ENCODE measurements at regions of chr4 and their contacts with region 1.

Region 1: DNA sequence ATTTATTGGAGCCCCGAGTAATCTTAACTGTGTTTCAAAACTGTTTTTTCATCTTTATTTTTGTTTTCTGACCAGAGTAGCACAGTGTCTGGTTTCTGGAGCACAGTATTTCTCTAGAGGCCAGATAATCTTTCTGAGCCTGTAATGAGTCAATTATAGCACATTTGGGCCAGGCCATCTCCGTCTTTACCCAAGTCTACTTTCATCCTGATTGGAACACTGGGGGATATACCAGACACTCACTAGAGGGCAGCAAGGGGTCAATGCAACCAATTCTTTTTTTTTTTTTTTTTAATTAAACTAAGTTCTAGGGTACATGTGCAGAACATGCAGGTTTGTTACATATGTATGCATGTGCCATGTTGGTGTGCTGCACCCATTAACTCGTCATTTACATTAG is 282.0 kb downstream of the ARHGAP24 start:
- DNase-seq: no peak
- H3K4me3 Mint-ChIP-seq: no peak overlapping the region
- H3K27ac Mint-ChIP-seq: no peak overlapping the region
- H3K4me1 Mint-ChIP-seq: no peaks in the 10 kb centered on the region
- H3K27me3 Mint-ChIP-seq: no peaks in the 10 kb centered on the region

Region 2: GRCh38 chr4:86043755-86044592 is 287.0 kb after region 1 on chr4:
- CTCF ChIA-PET with region 1: no interaction called
- intact Hi-C with region 1: loop called (anchors 10 kb)
- DNase-seq: peak; percentile 9
- H3K4me3 Mint-ChIP-seq: no peak overlapping the region
- H3K27ac Mint-ChIP-seq: no peak overlapping the region
- H3K4me1 Mint-ChIP-seq: no peaks in the 10 kb centered on the region
- H3K27me3 Mint-ChIP-seq: no peaks in the 10 kb centered on the region

Region 3: GRCh38 chr4:86155766-86156165 is 398.8 kb after region 1 on chr4:
- CTCF ChIA-PET with region 1: no interaction called
- intact Hi-C with region 1: no loop called
- DNase-seq: no peak
- H3K4me3 Mint-ChIP-seq: no peak overlapping the region
- H3K27ac Mint-ChIP-seq: no peak overlapping the region
- H3K4me1 Mint-ChIP-seq: no peaks in the 10 kb centered on the region
- H3K27me3 Mint-ChIP-seq: no peaks in the 10 kb centered on the region

Region 4: DNA sequence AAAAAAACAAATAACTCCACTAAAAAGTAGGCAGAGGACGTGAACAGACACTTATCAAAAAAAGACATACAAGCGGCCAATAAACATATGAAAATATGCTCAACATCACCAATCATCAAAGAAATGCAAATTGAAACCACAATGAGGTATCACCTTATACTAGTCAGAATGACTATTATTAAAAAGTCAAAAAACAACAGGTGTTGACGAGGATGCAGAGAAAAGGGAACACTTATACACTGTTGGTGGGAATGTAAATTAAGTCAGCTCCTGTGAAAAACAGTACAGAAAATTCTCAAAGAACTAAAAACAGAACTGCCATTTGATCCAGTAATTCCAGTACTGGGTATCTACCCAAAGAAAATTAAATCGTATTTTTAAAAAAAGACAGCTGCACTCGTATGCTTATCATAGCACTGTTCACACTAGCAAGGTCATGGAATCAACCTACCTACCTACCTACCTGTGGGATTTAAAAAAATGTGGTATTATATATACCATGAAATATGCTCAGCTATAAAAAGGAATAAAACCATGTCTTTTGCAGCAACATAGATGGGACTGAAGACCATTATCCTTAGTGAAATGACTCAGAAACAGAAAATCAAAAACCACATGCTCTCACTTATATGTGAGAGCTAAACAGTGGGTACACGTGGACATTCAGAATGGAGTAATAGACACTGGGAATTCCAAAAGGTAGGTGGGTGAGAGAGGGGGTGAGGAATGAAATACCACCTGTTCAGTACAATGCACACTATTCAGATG is 812.3 kb after region 1 on chr4:
- CTCF ChIA-PET with region 1: no interaction called
- intact Hi-C with region 1: no loop called
- DNase-seq: no peak
- H3K4me3 Mint-ChIP-seq: no peak overlapping the region
- H3K27ac Mint-ChIP-seq: no peak overlapping the region
- H3K4me1 Mint-ChIP-seq: no peaks in the 10 kb centered on the region
- H3K27me3 Mint-ChIP-seq: no peaks in the 10 kb centered on the region

Measured in activated naive CD4-positive, alpha-beta T cell treated with anti-CD3 and anti-CD28 coated beads for 36 hours (primary cell).